ENCODE measurements at regions of chr4 and their contacts with region 1.

Region 1: DNA sequence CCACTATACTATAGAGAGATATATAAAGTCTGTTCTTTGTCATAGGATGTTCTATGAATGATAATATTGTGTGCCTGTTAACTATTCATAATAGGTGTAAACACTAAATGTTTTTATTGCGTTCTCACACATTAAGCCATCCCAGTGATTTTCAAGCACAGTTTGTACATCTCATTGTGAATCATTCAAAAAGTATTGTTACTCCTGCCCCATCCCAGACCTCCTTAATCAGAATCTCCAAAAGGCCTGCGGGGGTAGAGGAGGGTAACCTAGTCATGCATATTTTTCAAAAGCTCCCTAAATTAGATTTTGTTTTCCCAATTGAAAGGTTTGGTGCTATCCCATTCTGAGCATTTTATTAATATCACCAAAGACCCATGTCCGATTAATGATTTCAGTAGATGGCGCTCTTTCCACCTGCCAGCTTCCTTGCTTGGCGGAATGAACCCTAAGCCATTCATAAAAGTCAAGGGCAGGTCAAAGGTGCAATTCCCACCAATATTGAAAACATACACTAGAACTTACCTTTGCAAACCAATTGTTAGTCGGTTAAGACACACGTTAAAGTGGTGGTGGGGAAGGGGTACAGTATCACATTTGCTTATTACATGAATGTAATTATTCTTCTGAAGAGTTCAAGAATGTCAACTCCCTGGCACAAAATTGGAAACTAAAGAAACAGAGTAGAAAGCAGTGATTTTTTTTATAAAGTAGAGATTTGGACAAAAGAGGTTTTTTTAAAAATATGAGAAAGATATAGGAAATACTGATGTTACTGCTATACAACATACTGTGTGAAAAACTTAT is 5.8 kb upstream of the TET2 start:
- DNase-seq: no peak
- H3K4me3 ChIP-seq: no peak overlapping the region
- H3K27ac ChIP-seq: no peak overlapping the region
- H3K4me1 ChIP-seq: peaks cover 0 to 22% (median 0%) of the 10 kb centered on the region in 3 donors
- H3K27me3 ChIP-seq: no peaks in the 10 kb centered on the region
- CTCF ChIP-seq: peak in 5 of 6 experiments; percentile 34 to 61 (median 54)
- POLR2A ChIP-seq: no peak

Region 2: DNA sequence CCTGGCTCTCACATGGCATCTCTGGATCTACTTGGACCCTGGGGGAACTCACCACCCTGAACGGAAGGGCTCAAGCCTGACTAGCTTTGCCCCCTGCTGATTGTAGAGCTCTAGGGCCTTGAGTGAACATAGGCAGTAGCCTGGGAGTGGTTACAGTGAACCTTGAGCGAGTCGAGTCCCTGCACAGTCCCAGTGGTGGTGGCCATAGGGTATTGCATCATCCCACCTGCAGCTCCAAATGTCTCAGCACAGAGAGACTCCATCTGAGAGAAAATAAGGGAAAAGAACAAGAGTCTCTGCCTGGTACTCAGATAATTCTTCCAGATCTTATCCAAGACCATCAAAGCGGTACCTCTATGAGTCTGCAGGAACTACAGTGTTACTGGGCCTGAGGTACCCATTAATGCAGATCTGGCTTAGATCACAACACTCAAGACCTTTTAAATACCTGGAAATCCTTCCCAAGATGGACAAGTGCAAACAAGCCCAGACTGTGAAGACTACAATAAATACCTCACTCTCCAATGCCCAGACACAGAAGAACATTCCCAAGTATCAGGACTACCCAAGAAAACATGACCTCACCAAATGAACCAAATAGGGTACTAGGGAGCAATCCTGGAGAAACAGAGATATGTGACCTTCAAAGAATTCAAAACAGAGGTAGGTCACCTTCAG is 161.7 kb before region 1 on chr4:
- intact Hi-C with region 1: no loop called
- DNase-seq: no peak
- H3K4me3 ChIP-seq: no peak overlapping the region
- H3K27ac ChIP-seq: no peak overlapping the region
- H3K4me1 ChIP-seq: no peaks in the 10 kb centered on the region
- H3K27me3 ChIP-seq: no peaks in the 10 kb centered on the region
- CTCF ChIP-seq: no peak
- POLR2A ChIP-seq: no peak

Region 3: GRCh38 chr4:104989371-104989770 is 151.5 kb before region 1 on chr4:
- intact Hi-C with region 1: no loop called
- DNase-seq: no peak
- H3K4me3 ChIP-seq: no peak overlapping the region
- H3K27ac ChIP-seq: no peak overlapping the region
- H3K4me1 ChIP-seq: no peaks in the 10 kb centered on the region
- H3K27me3 ChIP-seq: no peaks in the 10 kb centered on the region
- CTCF ChIP-seq: no peak
- POLR2A ChIP-seq: no peak

Region 4: DNA sequence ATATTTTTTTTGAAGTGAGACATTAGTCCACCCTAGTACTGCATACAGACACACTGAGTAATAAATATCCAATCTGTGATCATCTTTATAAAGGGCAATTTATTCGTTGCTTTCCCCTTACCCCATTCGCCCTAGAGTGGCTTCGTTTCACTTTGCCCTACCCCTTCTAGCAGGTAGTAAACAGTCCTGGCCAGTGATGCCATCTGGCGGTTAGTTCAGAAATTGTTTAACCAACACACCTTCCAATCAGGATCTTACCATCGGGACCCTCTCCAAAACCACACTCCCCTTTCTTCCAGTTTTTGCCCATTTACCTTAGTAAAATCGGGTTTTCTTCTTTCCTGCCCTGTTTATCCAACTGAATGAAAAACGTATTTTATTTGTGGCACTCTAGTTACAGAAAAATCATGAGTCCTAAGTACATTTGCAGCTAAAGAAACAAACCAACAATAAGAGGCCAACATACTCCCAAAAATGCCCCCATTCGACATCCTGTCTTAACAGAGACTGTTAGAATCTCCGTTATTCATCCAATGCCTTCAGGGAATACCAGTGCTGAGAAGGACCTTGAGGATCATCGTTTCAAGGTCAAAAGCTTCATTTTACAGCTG is 330.8 kb after region 1 on chr4:
- intact Hi-C with region 1: loop called (anchors 5 kb)
- DNase-seq: peak; percentile 23
- H3K4me3 ChIP-seq: peak overlapping the region in 3 of 4 donors; percentile 91 to 99 (median 94)
- H3K27ac ChIP-seq: peak overlapping the region; percentile 22 to 99 (median 67)
- H3K4me1 ChIP-seq: peaks cover 12 to 47% (median 21%) of the 10 kb centered on the region in 3 donors
- H3K27me3 ChIP-seq: no peaks in the 10 kb centered on the region
- CTCF ChIP-seq: peak; percentile 34 to 73 (median 70)
- POLR2A ChIP-seq: no peak